ENCODE measurements at regions of chr12 and their contacts with region 1.

Region 1: DNA sequence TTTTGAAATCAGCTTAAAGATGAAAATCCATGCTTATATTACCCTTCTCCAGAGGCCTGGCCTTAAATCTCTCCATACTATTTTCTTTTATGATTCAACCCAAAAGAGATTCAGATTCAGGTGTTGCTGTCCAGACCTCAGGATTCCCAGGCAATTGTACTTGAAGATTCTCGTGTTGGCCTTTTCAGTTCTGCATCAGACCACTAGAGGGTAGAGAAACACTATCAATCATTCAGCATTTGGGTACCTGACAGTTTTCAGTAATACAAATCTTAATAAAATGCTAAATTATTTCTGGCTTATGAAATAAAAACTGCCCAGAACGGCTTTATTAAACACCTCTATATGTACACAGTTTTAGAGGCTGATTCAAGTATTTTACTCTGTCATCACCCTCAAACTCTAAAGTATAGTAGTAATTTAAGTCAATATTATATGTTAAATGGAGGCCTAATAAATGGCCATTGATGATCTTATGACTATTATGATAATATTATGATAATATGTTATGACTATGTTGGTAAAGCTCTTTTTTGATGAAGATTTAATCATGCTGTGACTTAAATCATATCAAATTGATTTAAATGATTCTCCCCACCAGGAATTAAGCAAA is 301.1 kb downstream of the DUSP6 start:
- DNase-seq: peak; percentile 73

Region 2: GRCh38 chr12:89162704-89163261 is 111.6 kb after region 1 on chr12:
- in situ Hi-C with region 1: loop called (anchors 25 kb)
- DNase-seq: peak; percentile 99

Region 3: DNA sequence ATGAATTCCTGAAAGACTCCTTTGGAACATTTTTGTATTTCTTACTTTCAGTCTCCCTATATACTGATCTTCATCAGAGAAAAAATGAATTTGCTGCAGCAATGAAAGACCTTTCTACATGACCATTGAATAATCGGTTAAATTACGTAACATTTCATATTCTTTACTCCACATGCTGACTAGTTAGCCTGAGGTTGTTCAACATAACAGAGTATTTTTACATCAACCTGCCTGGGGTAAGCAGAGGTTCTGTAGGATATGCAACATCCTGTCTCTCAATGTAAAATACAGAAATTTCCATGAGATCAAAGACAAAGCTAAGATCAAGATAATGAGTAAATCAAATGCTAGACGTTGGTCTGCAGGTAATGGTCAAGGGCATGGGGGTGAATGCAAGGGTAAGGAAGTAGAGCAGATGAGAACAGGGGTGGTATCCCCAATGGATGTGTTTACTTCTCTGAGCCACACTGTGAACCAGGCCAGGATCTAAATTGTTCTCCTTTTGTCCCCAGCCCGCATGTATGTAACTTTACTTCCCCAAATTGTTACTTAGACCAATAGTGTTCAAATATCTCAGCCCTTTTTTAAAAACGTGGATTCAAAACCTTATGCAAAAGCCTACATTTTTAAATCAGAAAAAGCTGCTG is 255.8 kb after region 1 on chr12:
- in situ Hi-C with region 1: no loop called
- DNase-seq: peak; percentile 52

Measured in KBM-7 (cell line).